Panc1 (cell line): ENCODE measurements at regions of chr7 and their contacts with region 1.

Region 1: GRCh38 chr7:31488562-31489203 is 25.2 kb upstream of the ITPRID1 start:
- DNase-seq: peak; percentile 48
- ATAC-seq: peak; percentile 93
- H3K4me3 ChIP-seq: no peak overlapping the region
- H3K27ac ChIP-seq: no peak overlapping the region
- H3K4me1 ChIP-seq: no peaks in the 10 kb centered on the region
- H3K27me3 ChIP-seq: no peaks in the 10 kb centered on the region
- CTCF ChIP-seq: peak; percentile 90

Region 2: DNA sequence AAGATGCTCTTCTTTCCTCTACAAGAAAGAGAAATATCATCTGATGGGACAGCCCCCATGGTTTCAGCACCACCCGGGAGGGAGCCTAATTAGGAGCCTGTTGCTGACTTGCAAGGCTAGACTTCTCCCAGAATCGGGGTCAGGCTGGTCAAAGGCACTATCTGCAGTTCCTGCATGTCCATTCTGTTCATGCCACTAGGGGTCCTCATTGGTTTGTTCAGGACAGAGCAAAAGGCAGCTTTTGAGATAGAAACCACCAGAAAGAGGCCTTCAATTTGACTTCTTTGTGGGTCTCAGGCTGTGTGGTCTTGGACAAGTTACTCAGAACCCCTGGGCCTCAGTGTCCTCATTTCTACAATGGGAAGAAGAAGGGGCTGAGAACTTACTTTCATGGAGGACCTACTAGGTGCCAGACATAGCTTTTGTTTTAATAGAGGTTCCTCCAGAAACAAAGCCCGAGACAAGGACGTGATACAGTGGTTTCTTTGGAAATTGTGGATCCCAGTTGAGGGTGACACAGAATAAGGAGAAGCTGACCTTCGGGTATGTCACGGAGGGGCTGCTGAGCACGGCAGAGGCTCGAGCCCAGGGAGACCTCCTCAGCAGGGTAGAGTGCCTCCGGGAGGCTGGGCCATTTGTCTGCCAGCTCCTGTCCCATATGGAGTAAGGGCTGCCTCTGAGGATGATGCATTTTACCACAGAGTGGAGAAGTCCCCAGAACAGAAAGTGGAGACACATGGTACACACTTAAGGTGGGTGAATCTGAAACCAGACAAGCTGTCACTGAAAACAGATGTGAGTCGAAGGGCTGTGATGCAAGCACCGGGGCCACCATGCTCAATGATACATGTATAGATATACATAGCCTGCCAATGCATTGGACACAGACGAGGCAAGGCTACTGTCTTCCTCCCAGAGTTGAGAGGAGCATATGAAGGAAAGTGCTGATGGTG is 115.1 kb before region 1 on chr7:
- CTCF ChIA-PET with region 1: no interaction called
- POLR2A ChIA-PET with region 1: no interaction called
- in situ Hi-C with region 1: no loop called
- intact Hi-C with region 1: loop called (anchors 5 kb)
- DNase-seq: peak; percentile 61
- ATAC-seq: peak; percentile 93
- H3K4me3 ChIP-seq: no peak overlapping the region
- H3K27ac ChIP-seq: no peak overlapping the region
- H3K4me1 ChIP-seq: no peaks in the 10 kb centered on the region
- H3K27me3 ChIP-seq: peaks cover 12% of the 10 kb centered on the region
- CTCF ChIP-seq: peak; percentile 84

Region 3: GRCh38 chr7:31443457-31443856 is 45.2 kb before region 1 on chr7:
- CTCF ChIA-PET with region 1: no interaction called
- POLR2A ChIA-PET with region 1: no interaction called
- in situ Hi-C with region 1: no loop called
- intact Hi-C with region 1: loop called (anchors 5 kb)
- DNase-seq: peak; percentile 30
- ATAC-seq: peak; percentile 84
- H3K4me3 ChIP-seq: no peak overlapping the region
- H3K27ac ChIP-seq: no peak overlapping the region
- H3K4me1 ChIP-seq: no peaks in the 10 kb centered on the region
- H3K27me3 ChIP-seq: peaks cover 2% of the 10 kb centered on the region; the same call in 1 of the 2 replicates
- CTCF ChIP-seq: peak; percentile 87

Region 4: DNA sequence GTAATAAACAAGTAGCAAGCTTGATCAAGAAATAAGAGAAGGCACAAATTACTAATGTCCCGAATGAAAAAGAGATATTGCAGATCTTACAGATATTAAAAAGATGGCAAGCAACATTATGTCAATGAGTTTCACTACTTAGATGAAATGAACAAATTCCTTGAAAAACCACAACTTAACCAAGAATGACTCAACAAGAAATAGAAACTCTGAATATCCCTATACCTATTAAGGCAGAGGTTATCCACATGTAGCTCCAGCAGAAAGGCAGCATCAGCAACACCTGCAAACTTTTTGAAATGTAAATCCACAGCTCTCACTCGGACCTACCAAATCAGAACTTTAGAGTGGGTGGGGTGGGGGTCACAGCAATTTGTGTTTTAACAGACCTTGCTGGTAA is 547.9 kb after region 1 on chr7:
- CTCF ChIA-PET with region 1: no interaction called
- POLR2A ChIA-PET with region 1: no interaction called
- in situ Hi-C with region 1: no loop called
- intact Hi-C with region 1: no loop called
- DNase-seq: no peak
- ATAC-seq: no peak
- H3K4me3 ChIP-seq: no peak overlapping the region
- H3K27ac ChIP-seq: no peak overlapping the region
- H3K4me1 ChIP-seq: no peaks in the 10 kb centered on the region
- H3K27me3 ChIP-seq: no peaks in the 10 kb centered on the region
- CTCF ChIP-seq: no peak